ENCODE measurements at regions of chr12 and their contacts with region 1.

Region 1: GRCh38 chr12:55926738-55927587 is 731 bp downstream of the PYM1 start:
- DNase-seq: peak; percentile 72
- H3K4me3 ChIP-seq: peak overlapping the region; percentile 78
- H3K27me3 ChIP-seq: no peaks in the 10 kb centered on the region
- CTCF ChIP-seq: peak; percentile 91

Region 2: GRCh38 chr12:55817346-55818139 is 109.4 kb before region 1 on chr12 and contains the starts of genes ORMDL2 and SARNP:
- CTCF ChIA-PET with region 1: interaction called, 14 read pairs
- POLR2A ChIA-PET with region 1: no interaction called
- DNase-seq: peak; percentile 99
- H3K4me3 ChIP-seq: peak within 1 kb of the TSS; percentile 92
- H3K27me3 ChIP-seq: no peaks in the 10 kb centered on the region
- CTCF ChIP-seq: no peak
- polyA plus RNA-seq, gene ORMDL2: 47.4 and 63.9 TPM in 2 replicates
- polyA plus RNA-seq, gene SARNP: 52.1 and 102 TPM in 2 replicates

Region 3: DNA sequence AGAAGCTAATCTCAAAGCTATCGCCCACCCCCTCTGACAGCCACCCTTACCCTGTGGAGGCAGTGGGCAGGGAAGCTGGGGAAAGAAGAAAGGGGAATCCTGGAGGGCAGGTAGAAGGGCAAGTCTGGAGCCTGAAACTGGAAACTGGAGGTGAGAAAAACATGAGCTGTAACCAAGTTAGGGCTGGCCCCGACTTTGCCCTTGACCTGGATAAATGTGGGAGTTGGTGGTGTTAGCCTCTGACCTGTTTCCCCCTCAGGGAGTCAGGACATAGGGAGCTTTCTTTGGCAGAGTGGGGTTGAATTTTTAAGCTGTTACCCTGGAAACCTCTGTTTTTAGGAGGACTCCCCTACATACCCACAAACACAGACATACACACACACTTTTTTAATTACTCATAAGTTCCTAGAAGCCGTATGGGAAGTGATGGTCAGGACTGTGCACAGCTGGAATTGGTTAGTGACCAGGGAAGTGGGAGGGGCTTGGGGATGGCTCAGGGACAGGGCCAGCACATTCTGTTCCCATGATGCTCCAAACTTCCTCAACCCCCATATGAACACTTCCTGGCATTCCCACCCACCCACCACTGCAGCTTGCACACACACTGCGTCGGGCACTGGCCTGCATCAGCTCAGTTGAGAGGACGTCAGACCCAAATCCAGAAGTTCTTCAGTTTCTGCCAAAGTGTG is 79.2 kb before region 1 on chr12:
- CTCF ChIA-PET with region 1: interaction called, 11 read pairs
- POLR2A ChIA-PET with region 1: no interaction called
- DNase-seq: peak; percentile 99
- H3K4me3 ChIP-seq: peak overlapping the region; percentile 15; the same call in 1 of the 2 replicates
- H3K27me3 ChIP-seq: no peaks in the 10 kb centered on the region
- CTCF ChIP-seq: no peak

Region 4: DNA sequence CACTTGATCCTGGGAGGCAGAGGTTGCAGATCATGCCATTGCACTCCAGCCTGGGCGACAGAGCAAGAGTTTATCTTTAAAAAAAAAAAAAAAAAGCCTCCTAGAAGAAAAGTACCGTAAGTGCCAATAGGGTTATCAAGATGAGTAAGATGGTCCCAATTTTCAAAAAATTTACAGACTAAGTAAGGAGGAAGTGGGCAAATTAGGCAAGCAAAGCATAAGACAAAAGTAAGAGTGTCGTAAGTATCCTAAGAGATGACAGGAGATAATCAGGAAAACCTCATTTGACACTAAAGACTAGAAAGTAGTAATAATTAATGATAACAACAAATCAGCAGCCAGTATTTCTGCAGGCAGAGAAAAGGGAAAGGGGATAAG is 11.5 kb before region 1 on chr12:
- CTCF ChIA-PET with region 1: interaction called, 16 read pairs
- POLR2A ChIA-PET with region 1: no interaction called
- DNase-seq: no peak
- H3K4me3 ChIP-seq: no peak overlapping the region
- H3K27me3 ChIP-seq: no peaks in the 10 kb centered on the region
- CTCF ChIP-seq: no peak

Region 5: GRCh38 chr12:56630160-56630632 is 703.2 kb after region 1 on chr12 and contains the start of gene BAZ2A:
- CTCF ChIA-PET with region 1: no interaction called
- POLR2A ChIA-PET with region 1: interaction called, 17 read pairs
- DNase-seq: no peak
- H3K4me3 ChIP-seq: peak within 1 kb of the TSS; percentile 94
- H3K27me3 ChIP-seq: no peaks in the 10 kb centered on the region
- CTCF ChIP-seq: no peak
- polyA plus RNA-seq, gene BAZ2A: 45.3 and 65.1 TPM in 2 replicates